IMR-90 (cell line): ENCODE measurements at regions of chr17 and their contacts with region 1.

Region 1: DNA sequence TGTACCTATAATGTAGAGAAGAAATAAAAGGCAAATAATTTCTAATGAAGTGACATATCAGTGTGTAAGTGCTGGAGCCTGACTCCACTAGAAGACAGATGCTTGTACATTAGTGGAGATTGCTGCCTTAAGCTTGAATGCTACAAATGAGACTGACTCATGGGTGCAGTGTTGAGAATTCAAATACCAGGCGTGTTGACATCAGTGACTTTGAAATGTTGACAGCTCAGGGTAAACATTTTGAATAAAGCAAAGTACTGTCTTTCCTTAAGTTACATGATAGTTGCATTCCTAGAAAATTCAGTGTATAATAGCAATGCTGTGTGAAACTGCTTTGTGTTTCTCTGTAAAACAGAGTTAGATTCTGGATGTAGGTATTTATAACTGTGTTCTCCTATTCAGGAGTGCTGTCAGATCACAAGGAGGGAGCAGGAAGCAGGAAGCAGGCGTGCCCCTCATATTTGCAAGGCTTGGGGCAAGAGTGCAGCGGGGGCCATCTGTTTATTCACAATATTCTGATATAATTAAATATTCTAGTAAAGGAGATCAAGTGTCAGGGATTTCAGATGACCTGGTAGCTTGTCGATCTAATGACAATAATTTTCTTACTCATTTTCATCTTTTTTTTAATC is 119.0 kb downstream of the SPECC1 start:
- DNase-seq: peak; percentile 94
- ATAC-seq: peak; percentile 96
- H3K4me3 ChIP-seq: no peak overlapping the region
- H3K27ac ChIP-seq: peak overlapping the region; percentile 99; the same call in 1 of the 2 replicates
- H3K4me1 ChIP-seq: peaks cover 9% of the 10 kb centered on the region
- H3K27me3 ChIP-seq: no peaks in the 10 kb centered on the region
- CTCF ChIP-seq: no peak
- POLR2A ChIP-seq: no peak
- RAD21 ChIP-seq: 0 out of 2 replicates have a peak, but pooled peaks have one; percentile 21

Region 2: GRCh38 chr17:19904924-19905323 is 223.2 kb before region 1 on chr17:
- CTCF ChIA-PET with region 1: no interaction called
- POLR2A ChIA-PET with region 1: no interaction called
- dilution Hi-C with region 1: no loop called
- in situ Hi-C with region 1: no loop called
- intact Hi-C with region 1: no loop called
- DNase-seq: no peak
- ATAC-seq: no peak
- H3K4me3 ChIP-seq: no peak overlapping the region
- H3K27ac ChIP-seq: peak overlapping the region; percentile 97; the same call in 1 of the 2 replicates
- H3K4me1 ChIP-seq: peaks cover 15% of the 10 kb centered on the region
- H3K27me3 ChIP-seq: no peaks in the 10 kb centered on the region
- CTCF ChIP-seq: no peak
- POLR2A ChIP-seq: no peak
- RAD21 ChIP-seq: no peak

Region 3: DNA sequence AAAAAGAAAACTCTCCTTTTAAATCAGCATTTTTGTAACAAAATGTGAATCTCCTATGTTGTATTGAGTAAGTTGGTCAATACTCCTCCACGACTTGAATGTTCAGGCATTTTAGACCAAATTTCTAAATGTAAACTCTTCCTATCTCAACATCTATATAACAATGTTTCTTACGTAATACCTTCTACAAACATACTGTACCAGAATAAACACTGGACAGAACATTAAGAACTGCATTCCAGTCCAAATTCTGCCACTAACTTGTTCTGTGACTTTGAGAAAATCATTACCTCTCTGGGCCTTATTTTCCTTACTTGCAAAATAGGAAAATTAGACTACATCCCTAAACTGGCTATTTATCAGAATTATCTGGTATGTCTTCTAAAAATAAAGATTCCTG is 190.6 kb before region 1 on chr17:
- CTCF ChIA-PET with region 1: no interaction called
- POLR2A ChIA-PET with region 1: no interaction called
- dilution Hi-C with region 1: no loop called
- in situ Hi-C with region 1: no loop called
- intact Hi-C with region 1: no loop called
- DNase-seq: peak; percentile 33
- ATAC-seq: peak; percentile 61
- H3K4me3 ChIP-seq: no peak overlapping the region
- H3K27ac ChIP-seq: peak overlapping the region; percentile 65; the same call in 1 of the 2 replicates
- H3K4me1 ChIP-seq: peaks cover 6% of the 10 kb centered on the region
- H3K27me3 ChIP-seq: no peaks in the 10 kb centered on the region
- CTCF ChIP-seq: no peak
- POLR2A ChIP-seq: no peak
- RAD21 ChIP-seq: no peak

Region 4: GRCh38 chr17:20143740-20144139 is 15.6 kb after region 1 on chr17:
- CTCF ChIA-PET with region 1: no interaction called
- POLR2A ChIA-PET with region 1: no interaction called
- dilution Hi-C with region 1: no loop called
- in situ Hi-C with region 1: no loop called
- intact Hi-C with region 1: no loop called
- DNase-seq: no peak
- ATAC-seq: no peak
- H3K4me3 ChIP-seq: no peak overlapping the region
- H3K27ac ChIP-seq: no peak overlapping the region
- H3K4me1 ChIP-seq: no peaks in the 10 kb centered on the region; the same call in 1 of the 2 replicates
- H3K27me3 ChIP-seq: no peaks in the 10 kb centered on the region
- CTCF ChIP-seq: no peak
- POLR2A ChIP-seq: no peak
- RAD21 ChIP-seq: no peak

Region 5: GRCh38 chr17:20206068-20206467 is 77.9 kb after region 1 on chr17:
- CTCF ChIA-PET with region 1: no interaction called
- POLR2A ChIA-PET with region 1: interaction called, 3 read pairs
- dilution Hi-C with region 1: no loop called
- in situ Hi-C with region 1: no loop called
- intact Hi-C with region 1: loop called (anchors 5 kb)
- DNase-seq: no peak
- ATAC-seq: peak; percentile 41
- H3K4me3 ChIP-seq: no peak overlapping the region
- H3K27ac ChIP-seq: no peak overlapping the region; the same call in 1 of the 2 replicates
- H3K4me1 ChIP-seq: peaks cover 26% of the 10 kb centered on the region
- H3K27me3 ChIP-seq: no peaks in the 10 kb centered on the region
- CTCF ChIP-seq: no peak
- POLR2A ChIP-seq: no peak
- RAD21 ChIP-seq: no peak